Prostate gland (tissue), 2 donors: ENCODE measurements at regions of chr11 and their contacts with region 1.

Region 1: DNA sequence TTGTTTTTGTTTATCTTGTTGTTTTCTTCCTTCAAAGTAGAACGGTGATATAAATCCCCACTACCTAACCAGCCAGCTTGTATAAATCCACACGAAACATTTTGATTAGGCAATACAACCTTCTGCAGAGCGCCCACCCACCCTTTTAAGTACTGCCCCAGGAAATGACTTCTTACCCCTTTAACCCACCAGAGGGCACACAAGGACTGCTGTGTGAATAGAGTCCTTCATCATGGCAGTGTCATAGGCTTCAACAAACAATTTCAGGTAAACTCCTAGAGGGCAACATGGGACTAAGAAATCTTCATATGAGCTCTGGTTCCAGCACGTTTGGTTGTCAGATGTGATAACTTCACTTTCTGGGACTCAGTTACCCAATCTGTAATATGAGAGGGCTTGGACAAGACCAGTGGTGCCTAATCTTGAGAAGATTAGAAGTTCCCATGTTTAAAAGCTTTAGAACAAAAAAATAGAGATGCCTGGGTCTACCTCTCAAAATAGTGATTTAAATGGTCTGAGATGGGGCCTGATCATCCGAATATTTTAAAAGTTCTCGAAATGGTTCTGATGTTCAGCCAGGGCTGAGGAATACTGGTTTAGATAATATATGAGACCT is 56.1 kb downstream of the PIWIL4 start:
- DNase-seq: peak; percentile 70
- H3K4me3 ChIP-seq: no peak overlapping the region
- H3K27ac ChIP-seq: no peak overlapping the region
- H3K4me1 ChIP-seq: no peaks in the 10 kb centered on the region
- H3K27me3 ChIP-seq: no peaks in the 10 kb centered on the region
- CTCF ChIP-seq: peak; percentile 75 to 94 (median 90)
- POLR2A ChIP-seq: no peak

Region 2: GRCh38 chr11:94876645-94877442 is 253.6 kb after region 1 on chr11:
- intact Hi-C with region 1: loop called (anchors 5 kb)
- DNase-seq: peak; percentile 48
- H3K4me3 ChIP-seq: no peak overlapping the region
- H3K27ac ChIP-seq: peak overlapping the region; percentile 58 to 67
- H3K4me1 ChIP-seq: no peaks in the 10 kb centered on the region
- H3K27me3 ChIP-seq: no peaks in the 10 kb centered on the region
- CTCF ChIP-seq: peak in 1 of 4 experiments; percentile 32
- POLR2A ChIP-seq: no peak

Region 3: GRCh38 chr11:94897330-94897768 is 274.1 kb after region 1 on chr11:
- intact Hi-C with region 1: loop called (anchors 2 kb)
- DNase-seq: peak; percentile 23
- H3K4me3 ChIP-seq: no peak overlapping the region
- H3K27ac ChIP-seq: no peak overlapping the region
- H3K4me1 ChIP-seq: no peaks in the 10 kb centered on the region
- H3K27me3 ChIP-seq: no peaks in the 10 kb centered on the region
- CTCF ChIP-seq: peak; percentile 71 to 86 (median 80)
- POLR2A ChIP-seq: no peak

Region 4: DNA sequence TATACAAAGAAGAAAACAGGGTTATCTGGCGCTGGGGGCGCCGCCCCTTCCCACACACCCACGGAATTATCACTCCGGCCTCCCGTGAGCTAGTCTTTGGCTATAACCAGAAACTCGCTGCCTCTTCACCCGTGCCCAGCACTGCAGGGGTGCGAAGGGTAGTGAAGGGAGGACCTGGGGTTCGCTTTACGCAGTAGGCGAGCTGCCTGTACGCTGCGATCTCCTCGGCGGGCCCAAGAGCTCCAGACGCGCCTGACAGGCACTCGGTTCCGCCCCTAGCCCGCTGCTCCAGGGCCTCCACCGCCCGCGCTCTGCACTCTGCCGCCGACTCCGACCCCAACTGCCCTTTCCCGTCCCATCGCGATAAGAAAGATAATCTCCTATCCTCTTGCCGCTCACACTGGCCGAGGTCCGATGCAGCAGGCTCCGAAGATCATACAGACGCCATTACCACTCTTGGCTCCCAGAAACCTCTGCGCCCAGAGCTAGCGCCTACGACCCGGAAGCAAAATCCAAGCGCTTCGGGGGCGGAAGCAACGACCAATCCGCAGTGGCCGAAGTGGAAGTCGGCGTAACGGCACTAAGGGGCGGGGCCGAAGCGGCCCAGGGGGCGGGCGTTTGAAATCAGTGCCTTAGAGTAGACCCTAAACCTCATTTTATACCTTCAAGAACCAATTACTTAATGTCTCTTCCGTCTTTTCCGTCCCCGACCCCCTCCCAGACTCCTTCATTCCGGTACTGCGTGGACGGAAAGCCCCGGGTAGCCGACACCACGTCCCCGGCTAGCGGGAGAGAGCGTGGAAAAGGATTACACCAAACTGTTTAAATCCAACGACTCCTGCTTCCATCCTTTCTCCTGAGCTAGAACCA is 350.1 kb after region 1 on chr11 and contains the starts of genes CWC15 and KDM4D:
- intact Hi-C with region 1: loop called (anchors 5 kb)
- DNase-seq: peak; percentile 94
- H3K4me3 ChIP-seq: peak within 1 kb of the TSS; percentile 69 to 85
- H3K27ac ChIP-seq: peak within 1 kb of the TSS; percentile 73 to 78
- H3K4me1 ChIP-seq: no peaks in the 10 kb centered on the region
- H3K27me3 ChIP-seq: no peaks in the 10 kb centered on the region
- CTCF ChIP-seq: peak in 1 of 4 experiments; percentile 15
- POLR2A ChIP-seq: peak; percentile 38
- total RNA-seq, gene CWC15: 33.6 to 43.8 TPM
- total RNA-seq, gene KDM4D: 2.6 to 9.9 TPM